MCF 10A (cell line): ENCODE measurements at regions of chr15 and their contacts with region 1.

Region 1: GRCh38 chr15:90482124-90483011 is 47.4 kb upstream of the CRTC3 start:
- DNase-seq: peak; percentile 51
- H3K4me3 Mint-ChIP-seq: no peak overlapping the region
- H3K27ac Mint-ChIP-seq: no peak overlapping the region
- H3K4me1 Mint-ChIP-seq: peaks cover 18% of the 10 kb centered on the region
- H3K27me3 Mint-ChIP-seq: no peaks in the 10 kb centered on the region
- CTCF ChIP-seq: peak; percentile 56

Region 2: GRCh38 chr15:90394748-90395442 is 87.5 kb before region 1 on chr15:
- CTCF ChIA-PET with region 1: interaction called, 5 read pairs
- POLR2A ChIA-PET with region 1: no interaction called
- intact Hi-C with region 1: loop called (anchors 5 kb)
- DNase-seq: no peak
- H3K4me3 Mint-ChIP-seq: no peak overlapping the region
- H3K27ac Mint-ChIP-seq: peak overlapping the region; percentile 84
- H3K4me1 Mint-ChIP-seq: peaks cover 54% of the 10 kb centered on the region
- H3K27me3 Mint-ChIP-seq: no peaks in the 10 kb centered on the region
- CTCF ChIP-seq: no peak

Region 3: GRCh38 chr15:90463381-90463780 is 19.0 kb before region 1 on chr15:
- CTCF ChIA-PET with region 1: interaction called, 20 read pairs
- POLR2A ChIA-PET with region 1: interaction called, 5 read pairs
- intact Hi-C with region 1: no loop called
- DNase-seq: peak; percentile 40
- H3K4me3 Mint-ChIP-seq: no peak overlapping the region
- H3K27ac Mint-ChIP-seq: peak overlapping the region; percentile 5
- H3K4me1 Mint-ChIP-seq: peaks cover 28% of the 10 kb centered on the region
- H3K27me3 Mint-ChIP-seq: no peaks in the 10 kb centered on the region
- CTCF ChIP-seq: no peak

Region 4: GRCh38 chr15:90497912-90498311 is 15.5 kb after region 1 on chr15:
- CTCF ChIA-PET with region 1: interaction called, 10 read pairs
- POLR2A ChIA-PET with region 1: interaction called, 3 read pairs
- intact Hi-C with region 1: no loop called
- DNase-seq: no peak
- H3K4me3 Mint-ChIP-seq: no peak overlapping the region
- H3K27ac Mint-ChIP-seq: no peak overlapping the region
- H3K4me1 Mint-ChIP-seq: no peaks in the 10 kb centered on the region
- H3K27me3 Mint-ChIP-seq: no peaks in the 10 kb centered on the region
- CTCF ChIP-seq: no peak